Activated B cell treated with CpG ODN at 0.5 μM for 24 hours (primary cell): ENCODE measurements at regions of chr11 and their contacts with region 1.

Region 1: GRCh38 chr11:47407746-47408590 is at the start of gene SLC39A13:
- DNase-seq: peak; percentile 98
- ATAC-seq: peak; percentile 85
- H3K4me3 Mint-ChIP-seq: peak within 1 kb of the TSS; percentile 90
- H3K27ac Mint-ChIP-seq: peak within 1 kb of the TSS; percentile 95
- H3K4me1 Mint-ChIP-seq: peaks cover 24% of the 10 kb centered on the region
- H3K27me3 Mint-ChIP-seq: no peaks in the 10 kb centered on the region
- CTCF ChIP-seq: no peak
- total RNA-seq, gene SLC39A13: 27.5 and 28.2 TPM in 2 replicates

Region 2: GRCh38 chr11:47248664-47249377 is 159.1 kb before region 1 on chr11 and contains the start of gene ACP2:
- CTCF ChIA-PET with region 1: no interaction called
- POLR2A ChIA-PET with region 1: interaction called, 4 read pairs
- intact Hi-C with region 1: loop called (anchors 1 kb)
- DNase-seq: peak; percentile 82
- ATAC-seq: peak; percentile 96
- H3K4me3 Mint-ChIP-seq: peak within 1 kb of the TSS; percentile 98
- H3K27ac Mint-ChIP-seq: peak within 1 kb of the TSS; percentile 98
- H3K4me1 Mint-ChIP-seq: peaks cover 21% of the 10 kb centered on the region
- H3K27me3 Mint-ChIP-seq: no peaks in the 10 kb centered on the region
- CTCF ChIP-seq: no peak
- total RNA-seq, gene ACP2: 18.7 and 22.5 TPM in 2 replicates

Region 3: DNA sequence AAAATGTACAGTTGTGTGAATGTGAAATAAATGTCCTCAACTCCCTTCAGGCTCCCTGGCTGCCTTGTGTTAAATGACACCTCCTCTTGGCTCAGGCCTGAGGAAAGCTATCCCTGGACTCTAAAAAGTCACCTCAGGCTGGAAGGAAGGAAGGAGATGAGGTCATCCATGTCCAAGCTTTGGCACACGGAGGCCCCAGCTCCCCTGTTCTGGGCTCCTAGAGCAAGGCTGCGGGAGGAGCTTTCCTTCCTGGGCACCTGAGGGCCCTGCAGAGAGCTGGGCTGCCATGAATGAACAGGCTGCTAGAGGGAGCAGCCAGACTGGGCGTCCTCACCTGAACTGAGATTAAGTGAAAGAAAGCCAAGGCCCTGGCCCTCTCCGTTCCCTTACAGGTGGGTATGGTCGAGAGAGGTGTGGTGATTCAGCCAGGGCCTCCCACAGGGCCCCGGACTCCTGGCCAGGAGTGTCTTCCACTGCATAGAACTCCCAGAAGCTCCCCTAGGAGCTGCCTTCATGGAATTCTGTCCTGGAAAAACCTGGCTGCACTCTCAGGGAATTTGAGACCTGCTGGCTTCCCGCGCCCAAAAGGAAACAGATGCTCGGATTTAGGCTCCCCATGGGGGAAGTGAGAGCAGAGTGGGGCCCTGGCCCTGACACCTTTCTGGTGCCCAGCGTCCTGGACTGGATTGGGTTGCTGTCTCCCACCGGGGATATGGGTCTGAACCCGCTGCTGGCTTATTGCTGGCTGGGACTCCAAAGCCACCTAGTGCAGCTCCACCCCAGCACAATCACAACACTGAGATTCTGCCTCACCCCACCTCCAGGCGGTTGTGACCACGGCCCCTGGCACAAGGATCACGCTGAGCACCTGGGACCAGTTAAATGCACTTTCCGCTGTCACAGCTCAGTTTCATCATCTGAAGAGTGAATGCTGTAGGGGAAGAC is 77.7 kb before region 1 on chr11:
- CTCF ChIA-PET with region 1: interaction called, 5 read pairs
- POLR2A ChIA-PET with region 1: no interaction called
- intact Hi-C with region 1: loop called (anchors 1 kb)
- DNase-seq: no peak
- ATAC-seq: no peak
- H3K4me3 Mint-ChIP-seq: no peak overlapping the region
- H3K27ac Mint-ChIP-seq: no peak overlapping the region
- H3K4me1 Mint-ChIP-seq: peaks cover 14% of the 10 kb centered on the region
- H3K27me3 Mint-ChIP-seq: no peaks in the 10 kb centered on the region
- CTCF ChIP-seq: no peak

Region 4: GRCh38 chr11:47373876-47374720 is 33.9 kb before region 1 on chr11:
- CTCF ChIA-PET with region 1: interaction called, 67 read pairs
- POLR2A ChIA-PET with region 1: interaction called, 106 read pairs
- intact Hi-C with region 1: loop called (anchors 1 kb)
- DNase-seq: peak; percentile 81
- ATAC-seq: no peak
- H3K4me3 Mint-ChIP-seq: no peak overlapping the region
- H3K27ac Mint-ChIP-seq: peak overlapping the region; percentile 70
- H3K4me1 Mint-ChIP-seq: peaks cover 54% of the 10 kb centered on the region
- H3K27me3 Mint-ChIP-seq: no peaks in the 10 kb centered on the region
- CTCF ChIP-seq: peak; percentile 83

Region 5: DNA sequence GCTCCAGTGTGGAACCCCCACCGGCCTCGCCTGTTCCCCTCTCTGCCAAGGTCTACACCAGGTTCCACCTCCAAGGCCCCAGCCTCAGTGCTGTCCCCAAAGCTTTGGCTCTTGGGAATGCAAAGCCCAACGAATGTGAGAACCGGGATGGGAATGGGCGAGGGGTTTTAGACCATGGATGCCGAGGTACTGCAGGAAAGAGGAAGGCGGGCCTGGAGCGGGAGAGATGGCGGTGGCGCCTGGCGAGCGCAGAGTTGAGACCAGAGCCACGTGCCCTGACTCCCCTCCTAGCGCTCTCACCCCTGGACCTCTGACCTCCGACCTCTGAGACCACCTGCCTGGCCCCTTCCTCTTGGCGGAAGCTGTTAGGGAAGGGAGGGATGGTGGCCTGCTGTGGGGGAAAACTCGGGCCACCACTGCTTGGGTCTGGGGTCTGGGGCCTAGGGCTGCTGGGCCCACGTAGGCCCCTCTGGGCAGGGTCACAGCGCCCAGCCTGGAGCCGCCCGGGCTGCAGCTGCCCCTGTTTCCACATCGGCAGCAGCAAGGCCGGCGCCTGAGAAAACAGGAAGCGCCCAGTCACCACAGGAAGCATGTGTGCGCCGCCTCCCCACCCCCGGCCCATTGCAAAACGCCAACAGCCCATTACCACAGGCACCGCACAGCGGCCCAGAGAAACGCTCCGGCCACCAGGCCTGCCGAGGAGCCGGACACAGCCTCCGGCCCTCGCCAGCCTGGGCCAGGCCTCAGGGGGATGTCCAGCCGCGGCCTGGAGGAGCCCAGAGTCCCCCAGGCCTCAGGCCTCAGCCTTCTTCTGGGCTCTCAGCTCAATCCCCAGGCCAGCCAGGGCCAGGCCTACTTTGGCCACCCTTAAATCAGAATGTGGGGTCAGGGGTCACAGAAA is 13.4 kb before region 1 on chr11:
- CTCF ChIA-PET with region 1: interaction called, 8 read pairs
- POLR2A ChIA-PET with region 1: interaction called, 34 read pairs
- intact Hi-C with region 1: loop called (anchors 1 kb)
- DNase-seq: peak; percentile 56
- ATAC-seq: peak; percentile 81
- H3K4me3 Mint-ChIP-seq: peak overlapping the region; percentile 64
- H3K27ac Mint-ChIP-seq: peak overlapping the region; percentile 95
- H3K4me1 Mint-ChIP-seq: peaks cover 70% of the 10 kb centered on the region
- H3K27me3 Mint-ChIP-seq: no peaks in the 10 kb centered on the region
- CTCF ChIP-seq: no peak

Region 6: GRCh38 chr11:47454180-47454644 is 46.2 kb after region 1 on chr11:
- CTCF ChIA-PET with region 1: no interaction called
- POLR2A ChIA-PET with region 1: no interaction called
- intact Hi-C with region 1: loop called (anchors 2 kb)
- DNase-seq: peak; percentile 24
- ATAC-seq: peak; percentile 96
- H3K4me3 Mint-ChIP-seq: no peak overlapping the region
- H3K27ac Mint-ChIP-seq: no peak overlapping the region
- H3K4me1 Mint-ChIP-seq: peaks cover 5% of the 10 kb centered on the region
- H3K27me3 Mint-ChIP-seq: no peaks in the 10 kb centered on the region
- CTCF ChIP-seq: no peak

Region 7: GRCh38 chr11:47858169-47858543 is 450.2 kb after region 1 on chr11:
- CTCF ChIA-PET with region 1: no interaction called
- POLR2A ChIA-PET with region 1: no interaction called
- intact Hi-C with region 1: loop called (anchors 10 kb)
- DNase-seq: no peak
- ATAC-seq: no peak
- H3K4me3 Mint-ChIP-seq: peak overlapping the region; percentile 66
- H3K27ac Mint-ChIP-seq: peak overlapping the region; percentile 95
- H3K4me1 Mint-ChIP-seq: peaks cover 89% of the 10 kb centered on the region
- H3K27me3 Mint-ChIP-seq: no peaks in the 10 kb centered on the region
- CTCF ChIP-seq: no peak